ENCODE measurements at regions of chr12 and their contacts with region 1.

Region 1: DNA sequence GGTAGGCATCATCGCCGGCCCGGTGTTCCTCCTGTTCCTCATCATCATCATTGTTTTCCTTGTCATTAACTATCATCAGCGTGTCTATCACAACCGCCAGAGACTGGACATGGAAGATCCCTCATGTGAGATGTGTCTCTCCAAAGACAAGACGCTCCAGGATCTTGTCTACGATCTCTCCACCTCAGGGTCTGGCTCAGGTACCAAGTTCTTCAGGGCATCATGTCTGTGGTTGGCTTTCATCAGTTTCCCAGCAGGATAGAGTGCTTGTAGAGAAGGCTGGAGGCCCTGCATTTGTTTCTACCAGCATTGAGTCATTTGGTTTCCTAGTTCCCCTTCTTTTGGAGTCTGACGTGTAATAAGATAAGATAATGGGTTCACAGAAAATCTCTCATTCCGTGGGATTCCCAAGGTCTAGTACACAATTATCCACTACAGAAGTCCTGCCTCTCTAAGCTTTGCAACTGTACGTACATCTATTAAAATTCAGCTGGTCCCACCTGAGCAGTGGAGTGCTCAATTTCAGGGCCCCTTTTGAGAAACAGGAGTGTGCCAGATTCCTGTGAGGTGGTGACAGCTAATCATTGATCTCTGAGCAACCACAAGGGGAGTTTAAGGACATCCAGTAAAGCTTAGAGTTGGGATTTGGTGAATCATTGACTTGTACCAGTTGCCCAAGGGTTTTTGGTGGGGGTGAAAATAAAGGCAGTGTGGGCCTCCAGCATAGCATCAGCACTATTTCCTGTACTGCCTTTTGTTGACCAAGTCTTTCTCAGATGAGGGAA is 25.1 kb downstream of the ACVR1B start:
- DNase-seq: no peak
- H3K4me3 ChIP-seq: no peak overlapping the region
- H3K27ac ChIP-seq: no peak overlapping the region
- H3K4me1 ChIP-seq: peaks cover 30 to 44% (median 35%) of the 10 kb centered on the region in 4 donors
- H3K27me3 ChIP-seq: no peaks in the 10 kb centered on the region
- CTCF ChIP-seq: no peak
- EP300 ChIP-seq: no peak
- POLR2A ChIP-seq: no peak

Region 2: GRCh38 chr12:51773145-51773867 is 203.3 kb before region 1 on chr12:
- intact Hi-C with region 1: no loop called
- DNase-seq: no peak
- H3K4me3 ChIP-seq: no peak overlapping the region
- H3K27ac ChIP-seq: no peak overlapping the region
- H3K4me1 ChIP-seq: peaks cover 0 to 5% (median 0%) of the 10 kb centered on the region in 4 donors
- H3K27me3 ChIP-seq: no peaks in the 10 kb centered on the region
- CTCF ChIP-seq: no peak
- EP300 ChIP-seq: no peak
- POLR2A ChIP-seq: no peak

Region 3: DNA sequence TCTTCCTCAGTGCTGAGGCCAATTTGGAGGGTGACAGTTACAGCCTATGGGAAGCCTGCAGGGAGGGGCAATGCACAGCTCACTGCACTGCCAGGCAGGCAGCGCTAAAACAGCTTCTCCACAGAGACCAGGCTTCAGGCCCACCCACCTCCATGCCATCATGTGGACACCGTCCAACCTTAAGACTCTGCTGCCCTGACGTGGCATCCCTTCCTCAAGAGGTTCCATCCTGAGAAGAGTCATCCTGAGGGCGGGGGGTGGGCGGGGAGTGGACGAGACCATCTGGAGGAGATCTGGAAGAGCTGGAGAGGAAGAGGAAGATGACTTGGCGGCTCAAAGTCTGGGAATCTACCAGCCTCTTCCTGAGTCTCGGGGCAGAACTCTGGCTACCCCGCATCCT is 77.6 kb before region 1 on chr12:
- intact Hi-C with region 1: loop called (anchors 5 kb)
- DNase-seq: no peak
- H3K4me3 ChIP-seq: no peak overlapping the region
- H3K27ac ChIP-seq: peak overlapping the region in 1 of 4 donors; percentile 10
- H3K4me1 ChIP-seq: peaks cover 25 to 48% (median 32%) of the 10 kb centered on the region in 4 donors
- H3K27me3 ChIP-seq: peaks cover 0 to 20% (median 0%) of the 10 kb centered on the region in 4 donors
- CTCF ChIP-seq: no peak
- EP300 ChIP-seq: no peak
- POLR2A ChIP-seq: no peak

Region 4: GRCh38 chr12:52213512-52214420 is 237.2 kb after region 1 on chr12:
- intact Hi-C with region 1: no loop called
- DNase-seq: no peak
- H3K4me3 ChIP-seq: no peak overlapping the region
- H3K27ac ChIP-seq: no peak overlapping the region
- H3K4me1 ChIP-seq: peaks cover 5 to 16% (median 12%) of the 10 kb centered on the region in 4 donors
- H3K27me3 ChIP-seq: no peaks in the 10 kb centered on the region
- CTCF ChIP-seq: peak; percentile 95 to 99 (median 98)
- EP300 ChIP-seq: no peak
- POLR2A ChIP-seq: no peak

Region 5: GRCh38 chr12:52515927-52516831 is 539.6 kb after region 1 on chr12:
- intact Hi-C with region 1: no loop called
- DNase-seq: peak; percentile 89
- H3K4me3 ChIP-seq: no peak overlapping the region
- H3K27ac ChIP-seq: no peak overlapping the region
- H3K4me1 ChIP-seq: no peaks in the 10 kb centered on the region
- H3K27me3 ChIP-seq: peaks cover 0 to 8% (median 0%) of the 10 kb centered on the region in 4 donors
- CTCF ChIP-seq: no peak
- EP300 ChIP-seq: no peak
- POLR2A ChIP-seq: no peak